Activated CD4-positive, alpha-beta T cell treated with anti-CD3 and anti-CD28 coated beads for 36 hours (primary cell): ENCODE measurements at regions of chr14 and their contacts with region 1.

Region 1: GRCh38 chr14:104224506-104225277 is 86.3 kb downstream of the KIF26A start:
- DNase-seq: peak; percentile 69
- ATAC-seq: no peak
- H3K4me3 Mint-ChIP-seq: no peak overlapping the region
- H3K27ac Mint-ChIP-seq: no peak overlapping the region
- H3K4me1 Mint-ChIP-seq: peaks cover 17% of the 10 kb centered on the region
- H3K27me3 Mint-ChIP-seq: peaks cover 12% of the 10 kb centered on the region

Region 2: DNA sequence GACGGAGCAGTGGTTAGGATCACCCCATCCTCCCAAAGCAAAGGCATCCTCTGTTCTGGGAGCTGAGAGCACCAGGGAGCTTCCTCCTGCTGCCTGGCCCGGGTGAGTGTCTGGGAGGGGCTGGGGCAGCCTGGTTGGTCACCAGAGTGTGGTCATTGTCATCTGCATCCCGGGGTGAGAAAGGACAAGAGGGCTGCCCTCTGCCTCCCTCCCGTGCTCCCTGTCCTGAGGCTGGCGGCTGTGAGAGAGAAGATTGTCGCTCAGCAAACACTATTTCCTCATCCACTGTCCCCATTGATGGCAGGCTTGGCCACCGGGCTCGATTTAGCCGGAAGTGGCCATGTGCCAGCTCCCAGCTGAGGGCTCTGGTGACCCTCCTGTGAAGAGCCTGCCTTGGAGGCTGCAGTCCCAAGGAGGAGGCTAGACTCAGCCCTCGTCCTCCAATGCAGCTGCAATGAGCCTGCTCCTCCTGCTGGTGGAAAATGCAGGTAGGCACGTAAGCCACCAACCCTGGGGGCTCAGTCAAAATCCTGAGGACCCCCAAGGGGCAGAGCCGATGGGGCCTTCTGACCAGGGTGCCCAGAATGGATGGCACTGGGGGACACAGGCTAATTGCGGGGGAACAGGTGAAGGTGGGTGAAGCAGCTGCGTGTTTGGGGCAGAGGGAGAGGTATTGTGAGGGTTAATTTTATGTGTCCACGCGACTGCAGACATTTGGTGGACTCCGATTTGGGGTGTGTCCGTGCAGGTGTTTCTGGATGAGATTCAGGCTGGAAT is 69.3 kb after region 1 on chr14:
- CTCF ChIA-PET with region 1: no interaction called
- POLR2A ChIA-PET with region 1: no interaction called
- intact Hi-C with region 1: no loop called
- DNase-seq: no peak
- ATAC-seq: no peak
- H3K4me3 Mint-ChIP-seq: no peak overlapping the region
- H3K27ac Mint-ChIP-seq: no peak overlapping the region
- H3K4me1 Mint-ChIP-seq: no peaks in the 10 kb centered on the region
- H3K27me3 Mint-ChIP-seq: no peaks in the 10 kb centered on the region

Region 3: GRCh38 chr14:104341532-104342434 is 117.1 kb after region 1 on chr14:
- CTCF ChIA-PET with region 1: no interaction called
- POLR2A ChIA-PET with region 1: no interaction called
- intact Hi-C with region 1: loop called in 1 of 2 experiments (anchors 5 kb)
- DNase-seq: peak; percentile 77
- ATAC-seq: peak; percentile 90
- H3K4me3 Mint-ChIP-seq: no peak overlapping the region
- H3K27ac Mint-ChIP-seq: no peak overlapping the region
- H3K4me1 Mint-ChIP-seq: no peaks in the 10 kb centered on the region
- H3K27me3 Mint-ChIP-seq: peaks cover 6% of the 10 kb centered on the region